ENCODE measurements at regions of chr10 and their contacts with region 1.

Region 1: GRCh38 chr10:52313933-52314816 is at the start of gene DKK1:
- DNase-seq: peak; percentile 87
- H3K4me3 Mint-ChIP-seq: peak within 1 kb of the TSS; percentile 91
- H3K27ac Mint-ChIP-seq: peak within 1 kb of the TSS; percentile 93
- H3K4me1 Mint-ChIP-seq: peaks cover 23% of the 10 kb centered on the region
- H3K27me3 Mint-ChIP-seq: no peaks in the 10 kb centered on the region
- CTCF ChIP-seq: peak; percentile 97
- total RNA-seq, gene DKK1: 31.8 and 37.4 TPM in 2 replicates

Region 2: GRCh38 chr10:52443419-52444388 is 129.5 kb after region 1 on chr10:
- CTCF ChIA-PET with region 1: interaction called, 10 read pairs
- POLR2A ChIA-PET with region 1: interaction called, 23 read pairs
- intact Hi-C with region 1: loop called (anchors 2 kb)
- DNase-seq: peak; percentile 84
- H3K4me3 Mint-ChIP-seq: peak overlapping the region; percentile 24
- H3K27ac Mint-ChIP-seq: peak overlapping the region; percentile 90
- H3K4me1 Mint-ChIP-seq: peaks cover 32% of the 10 kb centered on the region
- H3K27me3 Mint-ChIP-seq: no peaks in the 10 kb centered on the region
- CTCF ChIP-seq: no peak

Region 3: DNA sequence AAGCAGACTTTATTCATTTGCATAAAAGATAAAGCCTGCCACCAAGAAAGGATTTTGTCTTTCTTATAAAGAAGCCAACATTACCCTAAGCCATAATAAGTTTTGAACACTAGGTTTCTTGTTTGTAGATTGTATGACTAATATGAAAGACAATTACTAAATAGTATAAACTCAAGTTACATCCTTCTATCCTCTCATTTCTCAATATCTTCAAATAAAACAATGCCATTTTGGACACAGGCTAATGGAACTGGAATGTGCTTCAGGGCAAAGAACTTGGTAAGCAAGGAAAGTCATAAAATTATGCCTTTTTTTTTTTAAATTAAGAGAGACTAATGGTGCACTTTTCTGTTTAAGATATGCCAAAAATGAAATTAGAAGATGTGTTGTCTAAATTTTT is 137.6 kb after region 1 on chr10:
- CTCF ChIA-PET with region 1: interaction called, 9 read pairs
- POLR2A ChIA-PET with region 1: interaction called, 38 read pairs
- intact Hi-C with region 1: loop called (anchors 1 kb)
- DNase-seq: peak; percentile 88
- H3K4me3 Mint-ChIP-seq: no peak overlapping the region
- H3K27ac Mint-ChIP-seq: no peak overlapping the region
- H3K4me1 Mint-ChIP-seq: peaks cover 28% of the 10 kb centered on the region
- H3K27me3 Mint-ChIP-seq: no peaks in the 10 kb centered on the region
- CTCF ChIP-seq: no peak

Region 4: GRCh38 chr10:52488606-52489485 is 174.7 kb after region 1 on chr10:
- CTCF ChIA-PET with region 1: interaction called, 389 read pairs
- POLR2A ChIA-PET with region 1: interaction called, 86 read pairs
- intact Hi-C with region 1: loop called (anchors 1 kb)
- DNase-seq: peak; percentile 71
- H3K4me3 Mint-ChIP-seq: no peak overlapping the region
- H3K27ac Mint-ChIP-seq: peak overlapping the region; percentile 88
- H3K4me1 Mint-ChIP-seq: peaks cover 15% of the 10 kb centered on the region
- H3K27me3 Mint-ChIP-seq: no peaks in the 10 kb centered on the region
- CTCF ChIP-seq: peak; percentile 53

Region 5: GRCh38 chr10:52566471-52567246 is 252.5 kb after region 1 on chr10:
- CTCF ChIA-PET with region 1: interaction called, 87 read pairs
- POLR2A ChIA-PET with region 1: interaction called, 4 read pairs
- intact Hi-C with region 1: loop called (anchors 1 kb)
- DNase-seq: peak; percentile 77
- H3K4me3 Mint-ChIP-seq: no peak overlapping the region
- H3K27ac Mint-ChIP-seq: peak overlapping the region; percentile 14
- H3K4me1 Mint-ChIP-seq: peaks cover 20% of the 10 kb centered on the region
- H3K27me3 Mint-ChIP-seq: no peaks in the 10 kb centered on the region
- CTCF ChIP-seq: peak; percentile 51

Measured in MCF 10A (cell line).